ENCODE measurements at regions of chr6 and their contacts with region 1.

Region 1: GRCh38 chr6:69732640-69733039 is 64.2 kb downstream of the LMBRD1 start:
- DNase-seq: peak; percentile 44
- ATAC-seq: peak; percentile 45
- H3K4me3 ChIP-seq: no peak overlapping the region
- H3K4me3 Mint-ChIP-seq: no peak overlapping the region
- H3K27ac ChIP-seq: peak overlapping the region in 1 of 2 donors; percentile 34
- H3K27ac Mint-ChIP-seq: no peak overlapping the region
- H3K4me1 ChIP-seq: no peaks in the 10 kb centered on the region
- H3K4me1 Mint-ChIP-seq: peaks cover 16% of the 10 kb centered on the region
- H3K27me3 ChIP-seq: no peaks in the 10 kb centered on the region
- H3K27me3 Mint-ChIP-seq: no peaks in the 10 kb centered on the region
- CTCF ChIP-seq: peak; percentile 61

Region 2: GRCh38 chr6:68891419-68891818 is 841.2 kb before region 1 on chr6:
- CTCF ChIA-PET with region 1: no interaction called
- POLR2A ChIA-PET with region 1: no interaction called
- intact Hi-C with region 1: no loop called
- DNase-seq: no peak
- ATAC-seq: no peak
- H3K4me3 ChIP-seq: no peak overlapping the region
- H3K4me3 Mint-ChIP-seq: no peak overlapping the region
- H3K27ac ChIP-seq: no peak overlapping the region
- H3K27ac Mint-ChIP-seq: no peak overlapping the region
- H3K4me1 ChIP-seq: no peaks in the 10 kb centered on the region
- H3K4me1 Mint-ChIP-seq: no peaks in the 10 kb centered on the region
- H3K27me3 ChIP-seq: no peaks in the 10 kb centered on the region
- H3K27me3 Mint-ChIP-seq: no peaks in the 10 kb centered on the region
- CTCF ChIP-seq: no peak

Region 3: DNA sequence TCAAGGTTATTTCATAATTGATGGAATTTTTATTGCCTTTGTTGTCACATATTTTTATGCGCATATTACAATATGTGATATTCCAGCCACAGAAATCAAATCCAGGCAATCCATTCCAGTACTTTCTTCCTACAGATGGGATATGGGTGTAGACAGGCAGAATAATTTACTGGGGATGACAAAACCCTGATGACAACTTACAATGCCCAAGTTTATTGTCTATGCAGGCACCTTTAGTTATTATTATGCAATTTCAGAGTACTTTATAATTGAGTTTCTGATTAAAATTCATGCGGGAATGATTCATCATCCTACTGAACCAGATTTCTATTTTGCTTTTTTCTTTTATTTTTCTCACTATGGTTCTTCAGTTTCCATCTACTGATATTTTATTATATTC is 294.5 kb before region 1 on chr6:
- CTCF ChIA-PET with region 1: no interaction called
- POLR2A ChIA-PET with region 1: no interaction called
- intact Hi-C with region 1: no loop called
- DNase-seq: no peak
- ATAC-seq: no peak
- H3K4me3 ChIP-seq: no peak overlapping the region
- H3K4me3 Mint-ChIP-seq: no peak overlapping the region
- H3K27ac ChIP-seq: no peak overlapping the region
- H3K27ac Mint-ChIP-seq: no peak overlapping the region
- H3K4me1 ChIP-seq: no peaks in the 10 kb centered on the region
- H3K4me1 Mint-ChIP-seq: no peaks in the 10 kb centered on the region
- H3K27me3 ChIP-seq: no peaks in the 10 kb centered on the region
- H3K27me3 Mint-ChIP-seq: no peaks in the 10 kb centered on the region
- CTCF ChIP-seq: no peak

Region 4: GRCh38 chr6:69696273-69696672 is 36.4 kb before region 1 on chr6:
- CTCF ChIA-PET with region 1: no interaction called
- POLR2A ChIA-PET with region 1: no interaction called
- intact Hi-C with region 1: loop called (anchors 5 kb)
- DNase-seq: no peak
- ATAC-seq: no peak
- H3K4me3 ChIP-seq: no peak overlapping the region
- H3K4me3 Mint-ChIP-seq: no peak overlapping the region
- H3K27ac ChIP-seq: no peak overlapping the region
- H3K27ac Mint-ChIP-seq: peak overlapping the region; percentile 8
- H3K4me1 ChIP-seq: no peaks in the 10 kb centered on the region
- H3K4me1 Mint-ChIP-seq: no peaks in the 10 kb centered on the region
- H3K27me3 ChIP-seq: no peaks in the 10 kb centered on the region
- H3K27me3 Mint-ChIP-seq: no peaks in the 10 kb centered on the region
- CTCF ChIP-seq: no peak

Region 5: GRCh38 chr6:69848552-69848951 is 115.9 kb after region 1 on chr6:
- CTCF ChIA-PET with region 1: no interaction called
- POLR2A ChIA-PET with region 1: no interaction called
- intact Hi-C with region 1: no loop called
- DNase-seq: no peak
- ATAC-seq: no peak
- H3K4me3 ChIP-seq: no peak overlapping the region
- H3K4me3 Mint-ChIP-seq: no peak overlapping the region
- H3K27ac ChIP-seq: no peak overlapping the region
- H3K27ac Mint-ChIP-seq: no peak overlapping the region
- H3K4me1 ChIP-seq: no peaks in the 10 kb centered on the region
- H3K4me1 Mint-ChIP-seq: peaks cover 10% of the 10 kb centered on the region
- H3K27me3 ChIP-seq: no peaks in the 10 kb centered on the region
- H3K27me3 Mint-ChIP-seq: no peaks in the 10 kb centered on the region
- CTCF ChIP-seq: no peak

Region 6: DNA sequence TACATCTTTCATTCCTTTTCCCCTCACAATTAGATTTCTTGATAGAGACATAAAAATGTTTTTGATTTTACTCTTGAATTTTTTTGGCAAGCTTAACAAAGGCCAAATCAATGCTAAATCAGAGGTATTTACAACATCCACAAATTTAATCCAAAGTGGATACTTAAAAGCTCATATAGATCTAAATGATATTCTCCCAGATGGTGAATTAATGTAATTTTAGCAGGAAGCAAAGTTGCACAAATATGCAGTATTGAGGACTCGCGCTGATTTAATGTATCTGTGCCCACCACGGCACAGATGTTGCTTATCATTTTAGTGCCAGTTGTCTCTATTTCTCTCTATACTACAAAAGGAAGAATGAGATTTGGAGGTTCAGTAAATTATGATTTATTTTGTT is 301.1 kb after region 1 on chr6:
- CTCF ChIA-PET with region 1: no interaction called
- POLR2A ChIA-PET with region 1: no interaction called
- intact Hi-C with region 1: no loop called
- DNase-seq: no peak
- ATAC-seq: no peak
- H3K4me3 ChIP-seq: no peak overlapping the region
- H3K4me3 Mint-ChIP-seq: no peak overlapping the region
- H3K27ac ChIP-seq: no peak overlapping the region
- H3K27ac Mint-ChIP-seq: no peak overlapping the region
- H3K4me1 ChIP-seq: no peaks in the 10 kb centered on the region
- H3K4me1 Mint-ChIP-seq: no peaks in the 10 kb centered on the region
- H3K27me3 ChIP-seq: no peaks in the 10 kb centered on the region
- H3K27me3 Mint-ChIP-seq: no peaks in the 10 kb centered on the region
- CTCF ChIP-seq: no peak

Measured in B cell (primary cell).